T-cell (primary cell): ENCODE measurements at regions of chr6 and their contacts with region 1.

Region 1: DNA sequence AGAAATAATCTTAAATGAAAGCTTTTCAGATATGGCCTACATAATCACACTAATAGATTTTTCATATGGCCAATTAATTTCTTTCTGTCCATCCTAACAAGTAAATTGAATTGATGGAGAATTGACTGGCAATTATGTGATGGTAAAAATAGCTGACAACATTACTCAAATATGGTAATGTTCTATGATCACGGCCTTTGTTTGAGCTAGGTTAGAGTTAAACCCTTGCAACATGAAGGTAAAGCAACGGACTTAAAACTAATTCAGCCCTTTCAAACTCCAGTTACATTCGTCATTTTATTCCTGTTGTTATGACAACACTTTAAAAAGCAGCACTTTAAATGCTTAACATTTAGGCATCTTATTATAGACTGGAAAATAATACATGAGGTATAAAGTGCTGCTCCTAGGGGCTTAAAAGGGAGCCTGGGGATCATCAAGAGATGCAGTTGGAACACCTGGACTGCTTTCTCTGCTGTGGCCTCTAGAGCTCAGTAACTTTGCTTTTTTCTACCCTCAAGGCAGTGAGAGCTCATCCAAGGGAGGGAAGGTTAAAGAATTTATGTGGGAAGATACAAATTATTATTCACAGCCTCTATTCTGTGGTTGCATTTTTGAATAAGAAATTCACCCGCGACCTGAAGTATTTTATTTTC is 46.9 kb downstream of the RIPOR2 start:
- DNase-seq: no peak
- ATAC-seq: peak in 1 of 4 experiments; percentile 62
- H3K4me3 ChIP-seq: no peak overlapping the region
- H3K4me3 Mint-ChIP-seq: peak overlapping the region in 2 of 3 donors; percentile 41 to 56
- H3K27ac ChIP-seq: peak overlapping the region; percentile 28
- H3K27ac Mint-ChIP-seq: peak overlapping the region; percentile 56 to 88
- H3K4me1 ChIP-seq: peaks cover 45 to 53% of the 10 kb centered on the region in 2 experiments
- H3K4me1 Mint-ChIP-seq: peaks cover 84 to 95% (median 87%) of the 10 kb centered on the region in 3 donors
- H3K27me3 ChIP-seq: no peaks in the 10 kb centered on the region
- H3K27me3 Mint-ChIP-seq: no peaks in the 10 kb centered on the region

Region 2: DNA sequence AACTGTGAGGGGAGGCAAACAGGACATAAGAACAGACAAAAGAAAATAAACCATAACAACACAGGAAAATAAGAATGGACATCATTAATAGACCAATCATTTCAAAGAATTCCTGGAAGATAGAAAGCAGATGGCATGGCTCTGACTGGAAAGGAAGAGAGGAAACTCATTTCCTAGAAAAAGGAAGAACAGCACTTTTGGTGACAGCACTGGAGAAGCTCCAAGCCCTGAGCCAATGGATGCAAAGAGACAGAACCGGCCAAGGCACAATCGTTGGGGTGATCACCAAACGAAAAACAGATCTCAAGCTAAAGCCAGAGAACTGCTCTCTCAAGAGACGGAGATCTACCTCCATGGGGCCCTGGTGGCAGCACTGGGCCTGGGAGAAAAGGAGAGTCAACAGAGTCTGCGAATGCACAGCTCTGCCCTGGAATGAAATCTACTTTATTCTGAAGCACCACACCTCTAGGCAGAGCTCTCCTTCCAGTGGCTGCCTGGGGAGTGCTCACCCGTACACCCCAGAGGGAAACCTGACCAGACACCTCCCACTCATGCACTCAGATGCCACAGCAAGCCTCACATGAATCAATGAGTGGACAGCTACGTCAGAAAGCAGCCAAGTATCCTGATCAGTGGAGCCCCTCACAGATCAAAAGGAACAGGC is 267.1 kb before region 1 on chr6:
- CTCF ChIA-PET with region 1: no interaction called
- POLR2A ChIA-PET with region 1: interaction called in 1 of 2 experiments, 14 read pairs
- DNase-seq: no peak
- ATAC-seq: no peak
- H3K4me3 ChIP-seq: no peak overlapping the region
- H3K4me3 Mint-ChIP-seq: no peak overlapping the region
- H3K27ac ChIP-seq: no peak overlapping the region
- H3K27ac Mint-ChIP-seq: no peak overlapping the region
- H3K4me1 ChIP-seq: no peaks in the 10 kb centered on the region
- H3K4me1 Mint-ChIP-seq: no peaks in the 10 kb centered on the region
- H3K27me3 ChIP-seq: no peaks in the 10 kb centered on the region
- H3K27me3 Mint-ChIP-seq: peaks cover 0 to 3% of the 10 kb centered on the region in 2 donors

Region 3: DNA sequence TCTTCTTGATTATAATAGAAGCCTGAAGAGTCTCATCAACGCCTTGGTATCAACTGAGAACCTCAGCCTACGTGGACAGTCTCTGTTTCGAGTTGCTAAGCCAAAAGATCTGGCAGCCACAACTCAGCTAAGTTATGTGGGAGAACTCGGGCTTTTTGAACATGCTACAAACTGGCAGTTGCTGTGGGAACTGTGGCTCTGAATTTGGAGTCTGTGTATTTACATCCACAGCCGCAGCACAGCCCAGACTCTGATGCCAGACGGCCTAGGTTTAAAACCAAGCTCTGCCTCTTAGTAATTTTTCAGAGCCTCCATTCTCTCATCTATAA is 11.1 kb after region 1 on chr6:
- CTCF ChIA-PET with region 1: interaction called, 4 to 14 read pairs
- POLR2A ChIA-PET with region 1: interaction called, 3 to 4 read pairs
- DNase-seq: peak in 29 of 35 experiments; percentile 9 to 63 (median 37)
- ATAC-seq: peak; percentile 26 to 79 (median 35)
- H3K4me3 ChIP-seq: peak overlapping the region in 1 of 2 donors; percentile 34
- H3K4me3 Mint-ChIP-seq: peak overlapping the region; percentile 43 to 54 (median 54)
- H3K27ac ChIP-seq: peak overlapping the region; percentile 60
- H3K27ac Mint-ChIP-seq: peak overlapping the region; percentile 91 to 92
- H3K4me1 ChIP-seq: peaks cover 41 to 73% of the 10 kb centered on the region in 2 experiments
- H3K4me1 Mint-ChIP-seq: peaks cover 88 to 95% (median 94%) of the 10 kb centered on the region in 3 donors
- H3K27me3 ChIP-seq: no peaks in the 10 kb centered on the region
- H3K27me3 Mint-ChIP-seq: no peaks in the 10 kb centered on the region